CD8-positive, alpha-beta T cell (primary cell): ENCODE measurements at regions of chr1 and their contacts with region 1.

Region 1: GRCh38 chr1:198699167-198700015 is 60.6 kb downstream of the PTPRC start:
- DNase-seq: peak; percentile 45 to 82 (median 73)
- ATAC-seq: peak; percentile 86
- H3K4me3 ChIP-seq: no peak overlapping the region
- H3K4me3 Mint-ChIP-seq: peak overlapping the region; percentile 8
- H3K27ac ChIP-seq: no peak overlapping the region
- H3K27ac Mint-ChIP-seq: peak overlapping the region; percentile 72
- H3K4me1 ChIP-seq: peaks cover 71% of the 10 kb centered on the region
- H3K4me1 Mint-ChIP-seq: peaks cover 83% of the 10 kb centered on the region
- H3K27me3 ChIP-seq: no peaks in the 10 kb centered on the region
- H3K27me3 Mint-ChIP-seq: no peaks in the 10 kb centered on the region
- CTCF ChIP-seq: peak; percentile 52

Region 2: GRCh38 chr1:198283222-198283621 is 416.2 kb before region 1 on chr1:
- CTCF ChIA-PET with region 1: no interaction called
- POLR2A ChIA-PET with region 1: no interaction called
- intact Hi-C with region 1: loop called in 1 of 2 experiments (anchors 10 kb)
- DNase-seq: no peak
- ATAC-seq: no peak
- H3K4me3 ChIP-seq: no peak overlapping the region
- H3K4me3 Mint-ChIP-seq: no peak overlapping the region
- H3K27ac ChIP-seq: no peak overlapping the region
- H3K27ac Mint-ChIP-seq: no peak overlapping the region
- H3K4me1 ChIP-seq: no peaks in the 10 kb centered on the region
- H3K4me1 Mint-ChIP-seq: peaks cover 29% of the 10 kb centered on the region
- H3K27me3 ChIP-seq: no peaks in the 10 kb centered on the region
- H3K27me3 Mint-ChIP-seq: no peaks in the 10 kb centered on the region
- CTCF ChIP-seq: no peak

Region 3: DNA sequence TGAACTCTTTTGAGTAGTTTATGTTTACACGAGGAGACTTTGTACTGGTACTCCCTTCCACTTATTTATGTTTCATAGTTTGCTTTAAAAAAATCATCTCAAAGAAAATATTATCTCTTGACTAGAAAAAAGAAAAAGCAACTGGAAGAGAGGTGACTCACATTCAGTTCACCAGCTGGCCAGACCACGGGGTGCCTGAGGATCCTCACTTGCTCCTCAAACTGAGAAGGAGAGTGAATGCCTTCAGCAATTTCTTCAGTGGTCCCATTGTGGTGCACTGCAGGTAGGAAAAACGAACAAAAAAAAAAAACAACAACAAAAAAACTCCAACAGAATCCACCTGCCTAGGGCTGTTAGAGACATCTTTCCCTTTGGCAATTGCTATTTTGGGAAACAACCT is 42.4 kb after region 1 on chr1:
- CTCF ChIA-PET with region 1: no interaction called
- POLR2A ChIA-PET with region 1: interaction called, 4 read pairs
- intact Hi-C with region 1: loop called in 1 of 2 experiments (anchors 2 kb)
- DNase-seq: peak in 1 of 9 experiments; percentile 5
- ATAC-seq: no peak
- H3K4me3 ChIP-seq: no peak overlapping the region
- H3K4me3 Mint-ChIP-seq: no peak overlapping the region
- H3K27ac ChIP-seq: no peak overlapping the region
- H3K27ac Mint-ChIP-seq: peak overlapping the region; percentile 63
- H3K4me1 ChIP-seq: peaks cover 38% of the 10 kb centered on the region
- H3K4me1 Mint-ChIP-seq: peaks cover 47% of the 10 kb centered on the region
- H3K27me3 ChIP-seq: no peaks in the 10 kb centered on the region
- H3K27me3 Mint-ChIP-seq: no peaks in the 10 kb centered on the region
- CTCF ChIP-seq: no peak